BJ (cell line): ENCODE measurements at regions of chr14 and their contacts with region 1.

Region 1: GRCh38 chr14:71855399-71856036 is 76.7 kb upstream of the RGS6 start:
- DNase-seq: peak; percentile 5
- H3K4me3 ChIP-seq: no peak overlapping the region
- H3K27me3 ChIP-seq: 0 out of 2 replicates have a peak, but pooled peaks cover 1% of the 10 kb centered on the region
- CTCF ChIP-seq: peak; percentile 89

Region 2: DNA sequence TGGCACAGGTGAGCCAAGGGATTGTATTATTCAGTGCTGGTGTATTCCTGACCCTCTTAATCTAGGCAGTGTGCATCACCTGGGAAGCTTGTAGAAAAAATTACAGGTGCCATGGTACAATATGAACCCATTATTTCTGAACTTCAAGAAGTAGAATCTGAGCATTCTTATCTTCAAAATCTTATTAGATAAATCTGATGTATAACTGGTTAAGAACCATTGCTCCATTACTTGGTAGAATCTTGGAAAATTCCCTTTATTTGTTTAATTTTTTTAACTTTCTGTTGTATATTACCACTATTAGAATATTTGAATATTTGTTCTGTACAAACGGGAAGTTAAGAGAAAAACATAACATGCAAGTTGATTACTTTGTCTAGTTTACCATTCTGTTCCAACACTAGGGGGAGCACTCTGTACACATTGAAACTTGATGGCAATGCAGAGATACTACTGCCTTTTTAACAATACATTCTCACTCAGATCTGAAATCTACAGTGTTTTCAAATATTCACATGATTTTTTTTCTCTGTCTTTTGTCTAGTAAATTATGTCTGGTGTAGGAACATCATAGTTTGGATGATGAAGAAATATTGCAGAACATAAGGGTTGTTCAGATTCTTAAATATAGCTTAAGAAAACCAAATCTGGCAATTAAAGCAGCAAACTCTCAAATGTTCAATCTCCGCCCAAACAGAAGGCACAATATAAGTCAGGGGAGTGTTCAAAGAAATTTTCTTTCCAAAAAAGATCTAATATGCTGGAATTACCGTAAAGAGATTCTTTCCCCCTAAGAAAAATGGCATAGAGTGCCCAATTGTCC is 751.6 kb before region 1 on chr14:
- CTCF ChIA-PET with region 1: interaction called, 26 read pairs
- POLR2A ChIA-PET with region 1: no interaction called
- DNase-seq: no peak
- H3K4me3 ChIP-seq: no peak overlapping the region
- H3K27me3 ChIP-seq: no peaks in the 10 kb centered on the region
- CTCF ChIP-seq: peak; percentile 78

Region 3: GRCh38 chr14:71764701-71765382 is 90.7 kb before region 1 on chr14:
- CTCF ChIA-PET with region 1: interaction called, 10 read pairs
- POLR2A ChIA-PET with region 1: no interaction called
- DNase-seq: no peak
- H3K4me3 ChIP-seq: no peak overlapping the region
- H3K27me3 ChIP-seq: no peaks in the 10 kb centered on the region; the same call in 1 of the 2 replicates
- CTCF ChIP-seq: no peak

Region 4: GRCh38 chr14:71967704-71968103 is 112.2 kb after region 1 on chr14:
- CTCF ChIA-PET with region 1: no interaction called
- POLR2A ChIA-PET with region 1: no interaction called
- DNase-seq: no peak
- H3K4me3 ChIP-seq: no peak overlapping the region
- H3K27me3 ChIP-seq: no peaks in the 10 kb centered on the region
- CTCF ChIP-seq: no peak